ENCODE measurements at regions of chr16 and their contacts with region 1.

Region 1: DNA sequence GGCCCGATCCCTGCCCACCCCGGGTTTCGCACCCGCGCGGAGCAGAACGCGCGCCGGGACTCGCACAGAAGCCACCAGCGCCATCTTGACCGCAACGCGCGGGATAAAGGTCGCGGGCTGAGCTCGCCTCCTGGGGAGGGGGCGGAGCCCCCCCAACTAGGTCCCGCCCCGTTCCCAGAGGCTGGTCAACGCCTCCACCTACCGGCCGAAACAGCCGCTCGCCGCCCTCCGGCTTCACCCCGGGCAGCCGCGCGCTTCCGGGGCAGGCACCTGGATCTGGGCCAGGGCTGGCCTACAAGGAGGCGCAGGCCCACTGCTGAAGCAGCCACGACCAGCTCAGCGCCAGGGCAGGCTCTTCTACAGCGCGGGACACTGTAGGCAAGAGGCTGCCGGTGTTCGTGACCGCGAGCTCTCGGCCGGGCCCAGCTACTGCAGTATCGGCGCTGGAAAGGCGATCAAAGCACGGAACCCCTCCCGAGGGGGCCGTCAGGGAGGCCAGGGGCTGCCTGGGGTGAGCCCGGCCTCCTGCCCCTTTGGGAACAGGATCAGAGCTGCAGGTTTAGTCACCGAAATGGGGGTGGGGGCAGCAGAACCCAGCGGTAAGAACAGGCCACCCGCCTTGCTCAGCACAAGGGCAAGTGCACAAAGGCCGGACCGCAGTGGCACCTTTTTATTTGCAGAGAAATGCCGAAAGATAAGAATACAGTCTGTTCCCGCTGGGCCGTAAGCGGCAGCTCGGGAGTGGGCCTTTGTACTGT is at the start of gene ECI1:
- DNase-seq: peak; percentile 50 to 89 (median 80)
- ATAC-seq: peak; percentile 70
- H3K4me3 ChIP-seq: peak within 1 kb of the TSS; percentile 57 to 64
- H3K4me3 Mint-ChIP-seq: peak within 1 kb of the TSS; percentile 85
- H3K27ac ChIP-seq: peak within 1 kb of the TSS; percentile 64 to 81
- H3K27ac Mint-ChIP-seq: peak within 1 kb of the TSS; percentile 90
- H3K4me1 ChIP-seq: peaks cover 8% of the 10 kb centered on the region
- H3K4me1 Mint-ChIP-seq: peaks cover 10% of the 10 kb centered on the region
- H3K27me3 ChIP-seq: no peaks in the 10 kb centered on the region
- H3K27me3 Mint-ChIP-seq: no peaks in the 10 kb centered on the region
- CTCF ChIP-seq: no peak
- total RNA-seq, gene ECI1: 10.6 to 11.0 TPM

Region 2: DNA sequence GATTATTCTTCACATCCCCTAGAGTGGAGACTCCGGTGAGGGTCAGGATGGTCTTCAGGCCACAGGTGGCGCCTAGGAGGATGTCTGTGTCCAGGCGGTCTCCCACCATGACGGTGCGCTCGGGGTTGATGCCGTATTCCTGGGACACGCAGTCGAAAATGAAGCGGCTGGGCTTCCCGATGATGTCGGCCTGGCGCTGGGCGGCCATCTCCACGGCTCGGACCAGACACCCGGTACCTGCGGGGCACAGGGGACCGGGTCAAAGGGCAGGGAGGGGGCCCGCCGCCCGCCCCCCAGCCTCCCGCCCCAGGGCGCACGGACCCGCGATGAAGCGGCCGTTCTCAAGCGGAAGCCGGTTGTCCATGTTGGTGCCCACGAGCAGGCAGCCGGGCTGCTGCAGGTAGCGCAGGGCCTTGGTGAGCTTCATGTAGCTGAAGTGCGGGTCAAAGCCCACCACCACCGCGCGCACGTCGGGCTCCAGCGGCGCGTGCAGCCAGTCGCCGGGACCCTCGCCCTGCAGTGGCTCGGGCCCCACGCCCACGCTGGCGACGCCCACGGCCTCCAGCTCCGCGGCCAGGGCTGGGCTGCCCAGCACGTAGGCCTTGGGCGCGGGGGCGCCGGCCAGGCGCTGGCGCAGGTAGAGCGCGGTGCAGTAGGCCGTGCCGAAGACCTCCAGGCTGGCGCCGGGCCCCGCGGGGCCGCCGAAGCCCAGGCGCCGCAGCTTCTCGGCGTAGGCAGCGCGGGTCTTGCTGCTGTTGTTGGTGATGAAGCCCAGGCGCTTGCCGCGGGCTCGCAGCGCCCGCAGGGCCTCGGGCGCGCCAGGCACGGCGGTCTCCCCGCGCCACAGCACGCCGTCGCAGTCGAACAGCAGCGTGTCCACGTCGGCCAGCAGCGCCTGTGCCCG is 37.6 kb before region 1 on chr16:
- CTCF ChIA-PET with region 1: no interaction called
- POLR2A ChIA-PET with region 1: interaction called, 11 read pairs
- intact Hi-C with region 1: loop called in 1 of 2 experiments (anchors 5 kb)
- DNase-seq: no peak
- ATAC-seq: no peak
- H3K4me3 ChIP-seq: peak overlapping the region; percentile 24 to 70
- H3K4me3 Mint-ChIP-seq: peak overlapping the region; percentile 78
- H3K27ac ChIP-seq: peak overlapping the region in 1 of 2 experiments; percentile 47
- H3K27ac Mint-ChIP-seq: no peak overlapping the region
- H3K4me1 ChIP-seq: peaks cover 14% of the 10 kb centered on the region
- H3K4me1 Mint-ChIP-seq: peaks cover 13% of the 10 kb centered on the region
- H3K27me3 ChIP-seq: no peaks in the 10 kb centered on the region
- H3K27me3 Mint-ChIP-seq: no peaks in the 10 kb centered on the region
- CTCF ChIP-seq: no peak

Region 3: DNA sequence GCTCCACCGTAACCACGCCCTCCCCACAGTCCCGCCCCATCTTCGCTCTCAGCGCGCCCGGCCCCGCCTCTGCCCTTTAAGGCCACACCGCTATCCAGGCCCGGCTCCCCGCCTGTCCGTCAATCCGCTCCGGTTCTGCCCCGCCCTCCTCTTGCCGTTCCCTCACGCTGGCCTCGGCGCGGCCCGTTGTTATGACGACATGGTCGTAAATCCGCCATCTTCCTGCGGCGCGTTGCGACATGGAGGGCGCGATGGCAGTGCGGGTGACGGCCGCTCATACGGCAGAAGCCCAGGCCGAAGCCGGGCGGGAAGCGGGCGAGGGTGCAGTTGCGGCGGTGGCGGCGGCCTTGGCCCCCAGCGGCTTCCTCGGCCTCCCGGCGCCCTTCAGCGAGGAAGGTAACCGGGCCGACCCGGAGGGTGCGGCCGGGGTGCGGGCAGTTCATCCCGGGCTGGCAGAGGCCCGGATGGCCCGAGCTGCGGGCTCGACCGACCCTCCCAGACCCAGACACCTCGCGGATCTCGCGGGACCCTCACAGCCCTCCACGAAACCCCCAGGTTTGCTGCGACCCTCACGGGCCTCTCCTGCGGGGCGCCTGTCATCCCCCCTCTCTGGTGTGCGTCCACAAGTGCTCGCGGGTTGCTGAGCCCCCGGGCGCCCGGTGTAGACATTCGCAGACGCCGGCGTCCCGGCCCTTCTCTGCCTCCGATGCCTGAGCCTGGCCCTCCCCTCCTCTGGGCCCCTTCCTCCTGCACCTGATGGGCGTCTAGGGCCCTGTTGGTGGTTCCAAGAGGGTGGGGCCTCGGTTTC is 28.1 kb before region 1 on chr16 and contains the start of gene E4F1:
- CTCF ChIA-PET with region 1: interaction called, 5 read pairs
- POLR2A ChIA-PET with region 1: interaction called, 4 read pairs
- intact Hi-C with region 1: loop called (anchors 1 to 2 kb)
- DNase-seq: peak; percentile 97 to 100 (median 99)
- ATAC-seq: peak; percentile 96
- H3K4me3 ChIP-seq: peak within 1 kb of the TSS; percentile 81 to 88
- H3K4me3 Mint-ChIP-seq: peak within 1 kb of the TSS; percentile 94
- H3K27ac ChIP-seq: peak within 1 kb of the TSS; percentile 67 to 76
- H3K27ac Mint-ChIP-seq: peak within 1 kb of the TSS; percentile 85
- H3K4me1 ChIP-seq: peaks cover 13% of the 10 kb centered on the region
- H3K4me1 Mint-ChIP-seq: peaks cover 22% of the 10 kb centered on the region
- H3K27me3 ChIP-seq: no peaks in the 10 kb centered on the region
- H3K27me3 Mint-ChIP-seq: no peaks in the 10 kb centered on the region
- CTCF ChIP-seq: no peak
- total RNA-seq, gene E4F1: 36.3 to 37.5 TPM

Region 4: GRCh38 chr16:2236337-2237101 is 15.1 kb before region 1 on chr16 and contains the start of gene DNASE1L2:
- CTCF ChIA-PET with region 1: no interaction called
- POLR2A ChIA-PET with region 1: no interaction called
- intact Hi-C with region 1: no loop called
- DNase-seq: no peak
- ATAC-seq: no peak
- H3K4me3 ChIP-seq: no peak within 1 kb of the TSS
- H3K4me3 Mint-ChIP-seq: no peak within 1 kb of the TSS
- H3K27ac ChIP-seq: no peak within 1 kb of the TSS
- H3K27ac Mint-ChIP-seq: no peak within 1 kb of the TSS
- H3K4me1 ChIP-seq: no peaks in the 10 kb centered on the region
- H3K4me1 Mint-ChIP-seq: peaks cover 3% of the 10 kb centered on the region
- H3K27me3 ChIP-seq: peaks cover 0 to 4% of the 10 kb centered on the region in 2 experiments
- H3K27me3 Mint-ChIP-seq: peaks cover 3% of the 10 kb centered on the region
- CTCF ChIP-seq: no peak
- total RNA-seq, gene DNASE1L2: 0.38 to 0.50 TPM

Region 5: GRCh38 chr16:2288726-2289125 is 37.1 kb after region 1 on chr16:
- CTCF ChIA-PET with region 1: no interaction called
- POLR2A ChIA-PET with region 1: no interaction called
- intact Hi-C with region 1: no loop called
- DNase-seq: no peak
- ATAC-seq: no peak
- H3K4me3 ChIP-seq: no peak overlapping the region
- H3K4me3 Mint-ChIP-seq: no peak overlapping the region
- H3K27ac ChIP-seq: no peak overlapping the region
- H3K27ac Mint-ChIP-seq: no peak overlapping the region
- H3K4me1 ChIP-seq: no peaks in the 10 kb centered on the region
- H3K4me1 Mint-ChIP-seq: no peaks in the 10 kb centered on the region
- H3K27me3 ChIP-seq: no peaks in the 10 kb centered on the region
- H3K27me3 Mint-ChIP-seq: no peaks in the 10 kb centered on the region
- CTCF ChIP-seq: no peak

Region 6: GRCh38 chr16:3509470-3509928 is 1257.8 kb after region 1 on chr16:
- CTCF ChIA-PET with region 1: no interaction called
- POLR2A ChIA-PET with region 1: no interaction called
- intact Hi-C with region 1: no loop called
- DNase-seq: peak; percentile 60 to 92 (median 86)
- ATAC-seq: peak; percentile 99
- H3K4me3 ChIP-seq: no peak overlapping the region
- H3K4me3 Mint-ChIP-seq: peak overlapping the region; percentile 63
- H3K27ac ChIP-seq: peak overlapping the region; percentile 31 to 63
- H3K27ac Mint-ChIP-seq: peak overlapping the region; percentile 93
- H3K4me1 ChIP-seq: peaks cover 57% of the 10 kb centered on the region
- H3K4me1 Mint-ChIP-seq: peaks cover 60% of the 10 kb centered on the region
- H3K27me3 ChIP-seq: no peaks in the 10 kb centered on the region
- H3K27me3 Mint-ChIP-seq: no peaks in the 10 kb centered on the region
- CTCF ChIP-seq: no peak